ENCODE measurements at regions of chr7 and their contacts with region 1.

Region 1: GRCh38 chr7:992709-993607 is 10.0 kb downstream of the CYP2W1 start:
- DNase-seq: peak; percentile 96
- H3K4me3 ChIP-seq: no peak overlapping the region
- H3K27ac ChIP-seq: no peak overlapping the region
- H3K4me1 ChIP-seq: no peaks in the 10 kb centered on the region
- H3K27me3 ChIP-seq: peaks cover 0 to under 1% of the 10 kb centered on the region in 2 donors
- CTCF ChIP-seq: peak; percentile 99 to 100 (median 100)
- POLR2A ChIP-seq: peak; percentile 13 to 45

Region 2: GRCh38 chr7:936131-937054 is 56.6 kb before region 1 on chr7:
- intact Hi-C with region 1: no loop called
- DNase-seq: no peak
- H3K4me3 ChIP-seq: no peak overlapping the region
- H3K27ac ChIP-seq: no peak overlapping the region
- H3K4me1 ChIP-seq: no peaks in the 10 kb centered on the region
- H3K27me3 ChIP-seq: no peaks in the 10 kb centered on the region
- CTCF ChIP-seq: no peak
- POLR2A ChIP-seq: no peak

Region 3: GRCh38 chr7:1065263-1066260 is 72.6 kb after region 1 on chr7:
- intact Hi-C with region 1: loop called (anchors 2 kb)
- DNase-seq: peak; percentile 81 to 84
- H3K4me3 ChIP-seq: no peak overlapping the region
- H3K27ac ChIP-seq: no peak overlapping the region
- H3K4me1 ChIP-seq: peaks cover 0 to 4% of the 10 kb centered on the region in 2 donors
- H3K27me3 ChIP-seq: no peaks in the 10 kb centered on the region
- CTCF ChIP-seq: peak; percentile 95 to 99 (median 98)
- POLR2A ChIP-seq: peak in 1 of 2 donors; percentile 8

Region 4: DNA sequence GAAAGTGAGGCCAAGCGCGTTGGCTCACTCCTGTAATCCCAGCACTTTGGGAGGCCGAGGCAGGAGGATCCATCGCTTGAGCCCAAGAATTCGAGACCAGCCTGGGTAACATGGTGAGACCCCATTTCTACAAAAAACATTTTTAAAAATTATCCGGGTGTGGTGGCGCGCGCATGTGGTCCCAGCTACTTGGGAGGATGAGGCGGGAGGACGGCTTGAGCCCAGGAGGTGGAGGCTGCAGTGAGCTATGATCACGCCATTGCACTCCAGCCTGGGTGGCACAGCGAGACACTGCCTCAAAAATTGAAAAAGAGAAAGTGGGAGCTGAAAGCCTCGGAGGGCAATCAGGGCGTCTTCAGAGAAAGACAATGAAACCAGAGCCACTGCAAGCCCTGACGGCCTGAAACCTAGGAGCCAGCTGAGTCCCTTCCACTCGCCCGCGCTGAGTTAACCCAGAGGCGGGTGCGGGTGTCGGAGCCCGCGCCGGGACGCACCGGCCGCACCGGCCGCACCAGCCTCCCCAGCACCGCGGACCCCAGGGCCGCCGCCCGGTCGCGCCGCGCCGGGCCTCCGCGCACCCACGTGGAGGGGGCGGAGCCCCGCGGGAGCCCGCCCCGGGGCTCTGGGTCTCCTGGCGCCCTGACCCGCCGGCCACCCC is 144.7 kb after region 1 on chr7:
- intact Hi-C with region 1: loop called (anchors 5 kb)
- DNase-seq: no peak
- H3K4me3 ChIP-seq: peak overlapping the region; percentile 68 to 91
- H3K27ac ChIP-seq: peak overlapping the region; percentile 76 to 81
- H3K4me1 ChIP-seq: peaks cover 0 to 4% of the 10 kb centered on the region in 2 donors
- H3K27me3 ChIP-seq: no peaks in the 10 kb centered on the region
- CTCF ChIP-seq: no peak
- POLR2A ChIP-seq: no peak